HCT116 (cell line): ENCODE measurements at regions of chr14 and their contacts with region 1.

Region 1: DNA sequence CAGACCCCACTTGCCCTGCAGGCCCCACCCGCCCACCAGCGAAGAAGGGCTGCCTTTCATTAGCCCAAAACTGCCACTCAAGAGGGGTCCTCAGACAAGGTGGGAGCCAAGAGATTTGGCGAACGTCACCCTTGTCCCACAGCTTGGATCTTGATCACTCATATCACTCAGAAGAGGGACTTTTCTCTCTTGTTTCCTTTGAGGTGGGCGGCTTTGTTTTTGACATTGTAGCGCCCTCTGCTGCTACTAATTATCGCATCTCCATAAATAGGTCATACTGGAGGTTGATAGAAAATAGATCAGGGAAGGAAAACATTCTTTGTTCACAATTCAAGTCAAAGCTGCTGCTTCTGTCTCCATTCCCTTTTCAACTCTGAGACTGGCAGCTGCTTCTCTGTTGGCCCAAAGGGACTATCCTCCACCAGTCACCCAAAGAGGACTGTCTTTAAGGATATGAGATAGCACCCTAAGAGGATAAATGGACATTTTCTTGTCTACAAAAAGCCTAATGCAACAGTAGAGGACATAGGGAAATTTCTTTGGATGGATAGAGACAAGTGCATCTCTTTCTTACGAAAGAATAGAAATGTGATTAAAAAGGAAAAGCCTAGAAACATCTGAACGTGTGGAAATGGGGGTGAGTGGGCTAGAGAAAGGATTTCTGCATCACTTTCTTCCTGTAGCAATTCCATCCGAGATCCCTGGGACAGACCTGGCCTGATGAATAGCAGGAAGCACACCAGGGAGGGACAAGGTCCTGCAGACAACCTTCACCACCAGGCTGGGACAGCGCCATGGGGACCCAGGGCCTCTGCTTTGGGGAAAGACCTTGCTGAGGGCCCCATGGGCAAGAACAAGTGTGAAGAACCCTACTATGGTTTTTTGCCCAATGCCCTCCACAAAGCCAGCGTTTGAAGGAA is 115.8 kb downstream of the DAD1 start:
- DNase-seq: peak; percentile 34
- ATAC-seq: peak; percentile 73
- H3K4me3 ChIP-seq: no peak overlapping the region
- H3K27ac ChIP-seq: no peak overlapping the region
- H3K4me1 ChIP-seq: no peaks in the 10 kb centered on the region
- H3K27me3 ChIP-seq: peaks cover 63% of the 10 kb centered on the region
- CTCF ChIP-seq: peak; percentile 59 to 78 (median 62); a peak in 4 of 6 replicates
- POLR2A ChIP-seq: no peak
- RAD21 ChIP-seq: peak; percentile 72

Region 2: DNA sequence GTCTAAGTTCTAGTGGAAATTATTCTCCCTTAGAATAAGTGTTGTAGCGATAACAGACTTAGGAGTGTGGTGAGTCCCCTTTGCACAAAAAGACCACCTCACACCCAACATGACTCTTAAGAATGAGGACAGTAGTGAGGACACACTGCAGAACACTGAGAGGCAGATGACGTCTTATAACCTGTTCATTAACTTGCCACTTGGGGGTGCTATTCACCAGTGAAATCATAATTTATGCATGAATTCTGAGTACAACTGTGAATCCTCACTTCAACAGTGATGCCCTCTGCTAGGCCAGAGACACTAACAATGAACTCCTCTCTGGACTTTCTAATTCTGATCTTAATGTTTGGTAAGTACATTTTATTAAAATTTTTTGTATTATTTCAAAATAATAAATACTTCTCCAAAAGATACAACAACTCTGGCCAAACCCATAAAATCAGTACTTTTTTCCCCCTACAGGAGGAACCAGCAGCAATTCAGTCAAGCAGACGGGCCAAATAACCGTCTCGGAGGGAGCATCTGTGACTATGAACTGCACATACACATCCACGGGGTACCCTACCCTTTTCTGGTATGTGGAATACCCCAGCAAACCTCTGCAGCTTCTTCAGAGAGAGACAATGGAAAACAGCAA is 158.9 kb before region 1 on chr14:
- CTCF ChIA-PET with region 1: interaction called, 6 read pairs
- POLR2A ChIA-PET with region 1: no interaction called
- RAD21 ChIA-PET with region 1: no interaction called
- intact Hi-C with region 1: loop called (anchors 2 kb)
- DNase-seq: peak; percentile 60
- ATAC-seq: peak; percentile 95
- H3K4me3 ChIP-seq: no peak overlapping the region
- H3K27ac ChIP-seq: no peak overlapping the region
- H3K4me1 ChIP-seq: no peaks in the 10 kb centered on the region
- H3K27me3 ChIP-seq: peaks cover 52% of the 10 kb centered on the region
- CTCF ChIP-seq: peak; percentile 44 to 82 (median 61); a peak in 5 of 6 replicates
- POLR2A ChIP-seq: no peak
- RAD21 ChIP-seq: peak; percentile 68

Region 3: DNA sequence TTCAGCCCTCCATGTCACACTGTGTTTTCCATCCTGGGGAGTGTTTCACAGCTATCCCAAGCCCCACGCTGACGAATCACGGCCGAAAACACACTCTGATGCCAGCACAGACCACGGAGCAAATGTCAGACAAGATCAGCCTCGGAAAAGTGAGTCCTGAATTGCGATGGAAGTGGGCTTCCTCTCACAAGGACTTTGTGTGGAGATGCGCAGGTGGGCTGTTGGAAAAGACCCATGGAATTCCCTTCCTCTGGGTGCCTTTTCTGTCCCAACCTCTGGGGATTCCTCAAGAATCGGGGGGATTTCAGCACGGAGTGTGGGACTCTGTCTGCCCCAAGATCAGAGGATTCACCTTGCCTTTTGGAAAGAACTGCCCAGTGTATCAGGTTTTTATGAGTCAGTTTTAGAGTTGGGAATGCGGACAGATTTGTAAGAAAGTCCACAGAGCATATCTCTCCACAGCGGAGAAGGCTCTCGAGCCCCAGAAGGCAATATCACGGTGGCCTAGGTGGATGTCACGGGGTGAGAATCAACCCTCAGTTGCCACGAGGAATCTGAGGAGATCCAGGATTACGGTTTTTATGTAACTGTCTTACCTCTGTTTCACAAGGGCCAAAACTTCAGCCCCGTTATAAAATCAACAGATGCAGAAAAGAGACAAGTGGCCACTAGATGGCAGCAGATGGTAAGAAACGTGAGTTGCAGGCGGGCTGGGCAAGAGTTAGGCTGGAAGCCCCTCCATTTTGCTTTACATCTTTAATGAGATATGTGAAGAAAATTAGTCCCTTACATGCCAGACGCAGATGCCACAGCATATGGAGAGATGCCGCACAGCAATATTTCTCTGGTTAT is 86.0 kb before region 1 on chr14:
- CTCF ChIA-PET with region 1: interaction called, 43 read pairs
- POLR2A ChIA-PET with region 1: no interaction called
- RAD21 ChIA-PET with region 1: no interaction called
- intact Hi-C with region 1: loop called (anchors 1 kb)
- DNase-seq: peak; percentile 53
- ATAC-seq: peak; percentile 75
- H3K4me3 ChIP-seq: no peak overlapping the region
- H3K27ac ChIP-seq: no peak overlapping the region
- H3K4me1 ChIP-seq: no peaks in the 10 kb centered on the region
- H3K27me3 ChIP-seq: peaks cover 83% of the 10 kb centered on the region
- CTCF ChIP-seq: peak; percentile 64 to 89 (median 66)
- POLR2A ChIP-seq: no peak
- RAD21 ChIP-seq: peak; percentile 77

Region 4: GRCh38 chr14:23114669-23115491 is 641.7 kb after region 1 on chr14:
- CTCF ChIA-PET with region 1: no interaction called
- POLR2A ChIA-PET with region 1: no interaction called
- RAD21 ChIA-PET with region 1: no interaction called
- intact Hi-C with region 1: no loop called
- DNase-seq: peak; percentile 42
- ATAC-seq: peak; percentile 88
- H3K4me3 ChIP-seq: peak overlapping the region; percentile 15 to 37; a peak in 3 of 4 replicates
- H3K27ac ChIP-seq: 0 out of 2 replicates have a peak overlapping the region, but pooled peaks have one; percentile 12
- H3K4me1 ChIP-seq: peaks cover 12 to 23% of the 10 kb centered on the region in 2 experiments
- H3K27me3 ChIP-seq: peaks cover 20% of the 10 kb centered on the region; the same call in 1 of the 2 replicates
- CTCF ChIP-seq: no peak
- POLR2A ChIP-seq: no peak
- RAD21 ChIP-seq: no peak